ENCODE measurements at regions of chr12 and their contacts with region 1.

Region 1: GRCh38 chr12:125533434-125534029 is 468.3 kb downstream of the AACS start:
- DNase-seq: no peak
- H3K4me3 ChIP-seq: no peak overlapping the region
- H3K27ac ChIP-seq: no peak overlapping the region
- H3K4me1 ChIP-seq: peaks cover 0 to 7% (median 6%) of the 10 kb centered on the region in 4 donors
- H3K27me3 ChIP-seq: peaks cover 0 to 34% (median 2%) of the 10 kb centered on the region in 4 donors
- CTCF ChIP-seq: peak; percentile 58 to 72 (median 61)
- EP300 ChIP-seq: no peak
- POLR2A ChIP-seq: no peak

Region 2: DNA sequence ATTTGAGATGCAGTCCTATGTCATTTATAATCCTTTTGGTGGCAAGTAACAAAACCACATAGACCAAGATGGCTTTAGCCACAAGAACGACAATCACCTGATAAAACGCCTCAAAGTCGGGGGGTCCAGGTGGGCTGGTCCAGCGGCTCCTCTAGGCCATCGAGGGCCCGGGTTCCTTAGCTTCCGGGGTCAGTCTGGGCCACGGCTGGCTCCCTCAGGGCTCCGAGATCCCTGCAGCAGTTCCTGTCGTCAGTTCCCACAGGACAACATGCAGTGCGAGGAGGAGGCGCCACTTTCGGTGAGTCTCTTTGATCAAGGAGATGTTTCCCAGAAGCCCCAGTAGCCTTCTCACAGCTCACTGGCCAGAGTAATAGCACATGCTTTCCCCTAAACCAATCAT is 106.3 kb after region 1 on chr12:
- intact Hi-C with region 1: no loop called
- DNase-seq: no peak
- H3K4me3 ChIP-seq: no peak overlapping the region
- H3K27ac ChIP-seq: no peak overlapping the region
- H3K4me1 ChIP-seq: no peaks in the 10 kb centered on the region
- H3K27me3 ChIP-seq: peaks cover 0 to 7% (median 0%) of the 10 kb centered on the region in 4 donors
- CTCF ChIP-seq: no peak
- EP300 ChIP-seq: no peak
- POLR2A ChIP-seq: no peak

Region 3: DNA sequence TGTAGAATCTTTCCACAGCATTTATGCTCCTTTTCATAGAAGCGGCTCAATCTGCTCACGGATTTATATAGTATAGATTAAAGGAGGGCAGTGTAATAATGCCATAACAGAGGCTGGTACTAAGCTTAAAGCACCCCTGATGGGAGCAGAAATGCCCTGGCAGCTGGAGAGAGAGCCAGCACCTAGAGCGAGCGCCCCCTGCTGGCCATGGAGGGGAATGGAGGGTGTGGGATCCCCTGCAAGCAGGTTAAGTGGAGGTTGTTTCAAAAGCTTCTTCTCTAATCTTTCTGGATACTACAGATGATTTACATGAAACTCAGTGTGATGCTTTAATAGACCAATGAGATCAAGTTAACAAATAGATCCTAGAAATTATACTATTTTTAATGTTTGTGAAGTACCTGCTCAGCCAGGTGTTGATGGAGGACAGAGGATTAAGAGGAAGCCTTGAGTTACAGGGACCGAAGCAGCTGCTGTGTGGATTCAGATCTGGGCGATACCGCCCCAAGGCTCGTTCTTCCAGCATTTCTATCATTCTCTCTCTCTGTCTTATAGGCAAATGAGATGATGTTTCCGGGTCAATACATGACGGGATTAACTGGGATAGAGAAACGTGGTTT is 1214.1 kb after region 1 on chr12:
- intact Hi-C with region 1: loop called (anchors 5 kb)
- DNase-seq: no peak
- H3K4me3 ChIP-seq: no peak overlapping the region
- H3K27ac ChIP-seq: no peak overlapping the region
- H3K4me1 ChIP-seq: no peaks in the 10 kb centered on the region
- H3K27me3 ChIP-seq: peaks cover 0 to 6% (median 0%) of the 10 kb centered on the region in 4 donors
- CTCF ChIP-seq: peak; percentile 64 to 87 (median 81)
- EP300 ChIP-seq: no peak
- POLR2A ChIP-seq: no peak

Measured in esophagus muscularis mucosa (tissue), 4 donors.